ENCODE measurements at regions of chr12 and their contacts with region 1.

Region 1: DNA sequence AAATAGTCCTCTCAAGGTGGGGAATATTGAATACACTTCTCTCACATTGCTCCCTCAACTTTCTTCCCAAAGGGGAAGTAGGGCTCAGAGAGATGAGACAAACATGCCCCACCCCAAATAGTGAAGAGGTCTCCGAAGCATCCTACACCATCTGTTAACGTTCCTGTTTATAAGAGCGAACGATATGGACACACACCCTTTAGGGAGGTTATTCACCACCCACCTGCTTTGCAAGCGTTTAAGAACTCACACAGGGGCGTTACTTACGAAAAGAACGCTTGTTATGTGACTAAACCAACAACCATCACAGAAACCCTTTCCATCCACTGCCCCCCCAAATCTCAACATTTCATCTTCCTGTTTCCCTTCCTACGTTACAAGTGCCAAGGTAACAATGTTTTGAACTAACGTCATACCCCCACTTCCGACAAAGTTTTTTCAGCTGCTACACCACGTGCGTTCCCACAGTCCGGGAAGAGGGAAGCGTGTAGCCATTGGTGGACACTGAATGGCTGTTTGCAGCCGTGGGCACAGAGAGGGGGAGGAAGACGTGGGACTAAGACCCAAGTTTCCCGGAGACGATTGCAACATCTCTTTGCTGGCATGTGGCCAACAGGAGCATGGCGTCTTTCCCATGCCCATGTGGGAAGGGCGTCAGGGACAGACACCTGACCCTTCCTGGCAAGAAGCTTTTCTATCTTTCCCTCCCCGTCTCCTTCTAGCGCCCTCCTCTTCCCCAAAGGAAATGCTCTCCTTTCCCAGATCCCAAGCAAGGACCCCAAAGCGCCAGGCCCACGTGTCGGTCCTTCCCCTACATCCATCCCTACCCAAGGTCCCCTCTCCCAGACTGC is 1.2 kb downstream of the YBX3 start:
- DNase-seq: peak; percentile 87
- ATAC-seq: peak; percentile 92

Region 2: GRCh38 chr12:10212201-10213131 is 509.4 kb before region 1 on chr12 and contains the start of gene GABARAPL1:
- intact Hi-C with region 1: loop called (anchors 5 kb)
- DNase-seq: peak; percentile 98
- ATAC-seq: peak; percentile 96
- total RNA-seq, gene GABARAPL1: 282 TPM

Region 3: DNA sequence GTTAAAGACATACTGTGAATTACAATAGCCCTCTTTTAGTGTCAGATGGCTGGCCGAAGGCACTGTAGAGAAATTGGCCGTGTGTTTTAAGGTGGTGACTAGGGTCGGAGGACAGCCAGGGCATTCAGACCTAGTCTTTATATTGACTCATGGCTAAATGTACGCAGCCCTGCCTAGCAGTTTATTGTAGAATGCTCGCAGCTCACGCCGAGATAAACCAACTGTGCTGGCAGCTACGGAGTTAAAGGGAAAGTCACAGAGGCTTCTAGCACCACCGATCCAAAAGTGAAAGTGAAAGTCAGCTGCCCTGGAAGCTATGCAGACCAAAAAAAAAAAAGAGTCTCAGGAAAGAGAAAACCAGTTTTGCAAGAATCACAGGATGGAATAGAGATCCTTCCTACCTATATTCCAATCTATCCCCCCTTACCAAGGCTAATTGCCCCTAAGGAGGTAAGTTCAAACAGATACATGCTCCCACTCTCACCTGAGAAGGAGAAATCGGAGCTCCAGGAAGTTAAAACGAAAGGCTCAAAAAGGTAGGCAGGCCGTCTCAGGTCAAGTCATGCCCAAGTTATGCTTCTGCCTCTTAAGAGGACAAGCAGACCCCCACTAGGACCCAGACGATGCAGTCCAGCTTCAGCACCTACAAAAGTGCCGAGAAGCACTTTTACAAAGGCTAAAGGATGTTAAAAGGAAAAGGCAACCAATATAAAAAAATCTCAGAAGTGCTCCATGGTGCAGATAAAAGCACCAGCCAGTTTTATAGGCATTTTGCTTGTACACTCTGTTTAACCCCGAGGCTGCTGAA is 356.9 kb before region 1 on chr12:
- intact Hi-C with region 1: loop called (anchors 10 kb)
- DNase-seq: no peak
- ATAC-seq: peak; percentile 84

Region 4: GRCh38 chr12:10613349-10614055 is 108.4 kb before region 1 on chr12 and contains the start of gene MAGOHB:
- intact Hi-C with region 1: loop called (anchors 1 kb)
- DNase-seq: peak; percentile 97
- ATAC-seq: peak; percentile 99
- total RNA-seq, gene MAGOHB: 14.8 TPM

Region 5: DNA sequence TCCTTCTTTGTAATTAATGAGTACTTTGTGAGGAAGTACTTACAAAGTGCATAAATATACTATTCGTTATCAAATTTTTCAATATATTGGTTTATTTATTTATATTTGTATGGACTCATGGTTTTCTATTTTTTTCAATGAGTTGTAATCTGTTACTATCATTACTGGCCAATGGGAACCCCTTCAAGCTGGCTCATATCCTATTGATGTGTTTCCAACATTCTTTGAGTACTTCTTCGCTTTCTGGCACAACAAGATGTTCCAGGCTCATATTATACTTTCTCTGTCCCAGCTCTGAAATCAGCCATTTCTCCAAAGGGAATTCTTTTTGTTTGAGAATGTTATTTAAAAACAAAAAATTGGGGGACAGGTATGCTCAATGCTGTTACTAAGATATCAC is 16.2 kb before region 1 on chr12:
- intact Hi-C with region 1: loop called (anchors 2 kb)
- DNase-seq: no peak
- ATAC-seq: peak; percentile 81

Region 6: GRCh38 chr12:10749700-10750384 is 28.0 kb after region 1 on chr12:
- intact Hi-C with region 1: loop called (anchors 2 kb)
- DNase-seq: peak; percentile 61
- ATAC-seq: peak; percentile 94